Activated T-helper 1 cell treated with anti-CD3 and anti-CD28 coated beads, Interleukin-12 subunit alpha, Interleukin-12 subunit beta, Interleukin-2, Interleukin-4 antibody, amounts not matched to agents 30 ng/mL and 10 ng/mL and 1 ng/mL, durations not matched to agents 14 hours and 24 hours and 36 hours (primary cell): ENCODE measurements at regions of chr19 and their contacts with region 1.

Region 1: GRCh38 chr19:19821366-19821951 is at the start of gene ZNF506:
- DNase-seq: peak; percentile 88
- H3K4me3 Mint-ChIP-seq: peak within 1 kb of the TSS; percentile 98
- H3K27ac Mint-ChIP-seq: peak within 1 kb of the TSS; percentile 97
- H3K4me1 Mint-ChIP-seq: peaks cover 10% of the 10 kb centered on the region
- H3K27me3 Mint-ChIP-seq: no peaks in the 10 kb centered on the region
- total RNA-seq, gene ZNF506: 13.5 and 15.7 TPM in 2 replicates

Region 2: GRCh38 chr19:19597809-19598306 is 223.6 kb before region 1 on chr19:
- intact Hi-C with region 1: loop called (anchors 2 kb)
- DNase-seq: peak; percentile 73
- H3K4me3 Mint-ChIP-seq: peak overlapping the region; percentile 79
- H3K27ac Mint-ChIP-seq: peak overlapping the region; percentile 99
- H3K4me1 Mint-ChIP-seq: peaks cover 69% of the 10 kb centered on the region
- H3K27me3 Mint-ChIP-seq: no peaks in the 10 kb centered on the region

Region 3: DNA sequence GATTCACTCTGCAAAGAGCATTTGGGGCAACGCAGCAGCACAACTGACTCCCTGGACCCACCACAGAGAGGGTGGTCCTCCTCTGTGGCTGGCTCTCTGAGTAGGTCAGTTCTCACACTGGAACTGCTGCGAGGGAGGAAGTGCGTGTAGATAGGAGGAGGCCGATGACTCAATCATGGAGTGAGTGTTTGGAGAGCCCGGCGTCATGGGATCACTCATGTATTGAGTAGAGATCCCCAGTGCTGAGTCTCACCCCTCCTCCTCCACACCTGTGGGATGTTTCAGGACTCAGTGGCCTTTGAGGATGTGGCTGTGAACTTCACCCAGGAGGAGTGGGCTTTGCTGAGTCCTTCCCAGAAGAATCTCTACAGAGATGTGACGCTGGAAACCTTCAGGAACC is 143.9 kb before region 1 on chr19:
- intact Hi-C with region 1: no loop called
- DNase-seq: no peak
- H3K4me3 Mint-ChIP-seq: no peak overlapping the region
- H3K27ac Mint-ChIP-seq: no peak overlapping the region
- H3K4me1 Mint-ChIP-seq: no peaks in the 10 kb centered on the region
- H3K27me3 Mint-ChIP-seq: no peaks in the 10 kb centered on the region

Region 4: GRCh38 chr19:19732579-19733501 is 88.6 kb before region 1 on chr19 and contains the start of gene ZNF14:
- intact Hi-C with region 1: loop called (anchors 2 kb)
- DNase-seq: peak; percentile 86
- H3K4me3 Mint-ChIP-seq: peak within 1 kb of the TSS; percentile 99
- H3K27ac Mint-ChIP-seq: peak within 1 kb of the TSS; percentile 92
- H3K4me1 Mint-ChIP-seq: peaks cover 17% of the 10 kb centered on the region
- H3K27me3 Mint-ChIP-seq: no peaks in the 10 kb centered on the region
- total RNA-seq, gene ZNF14: 4.3 and 5.1 TPM in 2 replicates

Region 5: DNA sequence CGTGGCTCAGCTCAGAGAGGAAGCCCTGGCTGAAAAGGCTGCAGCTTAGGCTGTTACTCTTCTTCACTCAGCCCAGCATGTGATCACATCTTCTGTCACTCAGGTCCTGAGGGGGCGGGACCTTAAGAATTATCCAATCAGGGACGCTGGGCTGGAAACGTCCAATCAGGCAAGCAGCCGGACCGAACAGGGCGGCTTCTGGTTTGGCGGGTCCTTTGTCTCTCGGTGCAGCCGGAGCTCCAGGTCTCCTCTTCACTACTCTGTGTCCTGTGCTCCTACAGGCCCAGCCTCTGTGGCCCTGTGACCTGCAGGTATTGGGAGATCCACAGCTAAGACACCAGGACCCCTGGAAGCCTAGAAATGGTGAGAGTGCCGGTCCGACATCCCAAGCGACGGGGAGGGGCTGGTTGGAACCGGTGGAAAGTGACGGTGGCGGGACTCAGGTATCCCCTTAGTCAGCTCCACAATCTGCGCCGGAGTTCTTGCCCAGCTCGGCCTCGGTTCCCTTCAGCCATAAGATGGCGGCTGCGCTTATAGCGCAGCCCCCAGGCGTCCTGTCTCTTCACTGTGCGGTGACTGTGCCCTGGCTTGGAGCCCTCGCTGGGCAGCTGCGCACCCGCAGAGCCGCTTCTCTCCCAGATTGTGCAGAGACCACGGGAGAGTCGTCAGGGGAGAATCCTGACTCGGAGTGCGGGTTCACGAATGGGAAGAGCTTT is 79.4 kb after region 1 on chr19 and contains the start of gene ZNF93:
- intact Hi-C with region 1: loop called (anchors 1 kb)
- DNase-seq: peak; percentile 85
- H3K4me3 Mint-ChIP-seq: peak within 1 kb of the TSS; percentile 95
- H3K27ac Mint-ChIP-seq: peak within 1 kb of the TSS; percentile 90
- H3K4me1 Mint-ChIP-seq: peaks cover 16% of the 10 kb centered on the region
- H3K27me3 Mint-ChIP-seq: no peaks in the 10 kb centered on the region
- total RNA-seq, gene ZNF93: 6.8 and 7.2 TPM in 2 replicates